Endothelial cell of umbilical vein (primary cell): ENCODE measurements at regions of chr2 and their contacts with region 1.

Region 1: GRCh38 chr2:200828104-200828503 is 16.4 kb downstream of the BZW1 start:
- DNase-seq: no peak
- H3K4me3 ChIP-seq: no peak overlapping the region
- H3K27ac ChIP-seq: no peak overlapping the region
- H3K4me1 ChIP-seq: no peaks in the 10 kb centered on the region
- H3K27me3 ChIP-seq: peaks cover 0 to 2% of the 10 kb centered on the region in 2 experiments
- CTCF ChIP-seq: no peak
- POLR2A ChIP-seq: no peak

Region 2: GRCh38 chr2:200239216-200239615 is 588.9 kb before region 1 on chr2:
- CTCF ChIA-PET with region 1: no interaction called
- POLR2A ChIA-PET with region 1: no interaction called
- dilution Hi-C with region 1: no loop called
- intact Hi-C with region 1: no loop called
- DNase-seq: no peak
- H3K4me3 ChIP-seq: no peak overlapping the region
- H3K27ac ChIP-seq: no peak overlapping the region
- H3K4me1 ChIP-seq: no peaks in the 10 kb centered on the region
- H3K27me3 ChIP-seq: peaks cover 3 to 9% of the 10 kb centered on the region in 2 experiments
- CTCF ChIP-seq: no peak
- POLR2A ChIP-seq: no peak

Region 3: GRCh38 chr2:200850512-200851256 is 22.6 kb after region 1 on chr2:
- CTCF ChIA-PET with region 1: interaction called, 10 read pairs
- POLR2A ChIA-PET with region 1: no interaction called
- dilution Hi-C with region 1: no loop called
- intact Hi-C with region 1: no loop called
- DNase-seq: no peak
- H3K4me3 ChIP-seq: no peak overlapping the region
- H3K27ac ChIP-seq: no peak overlapping the region
- H3K4me1 ChIP-seq: no peaks in the 10 kb centered on the region
- H3K27me3 ChIP-seq: no peaks in the 10 kb centered on the region
- CTCF ChIP-seq: no peak
- POLR2A ChIP-seq: peak; percentile 36